Ascending aorta (tissue), 2 donors: ENCODE measurements at regions of chr4 and their contacts with region 1.

Region 1: GRCh38 chr4:1899149-1900086 is 28.2 kb downstream of the NSD2 start:
- DNase-seq: peak; percentile 13 to 84
- H3K4me3 ChIP-seq: no peak overlapping the region
- H3K27ac ChIP-seq: no peak overlapping the region
- H3K4me1 ChIP-seq: no peaks in the 10 kb centered on the region
- H3K27me3 ChIP-seq: no peaks in the 10 kb centered on the region
- CTCF ChIP-seq: peak; percentile 72 to 87 (median 80)

Region 2: DNA sequence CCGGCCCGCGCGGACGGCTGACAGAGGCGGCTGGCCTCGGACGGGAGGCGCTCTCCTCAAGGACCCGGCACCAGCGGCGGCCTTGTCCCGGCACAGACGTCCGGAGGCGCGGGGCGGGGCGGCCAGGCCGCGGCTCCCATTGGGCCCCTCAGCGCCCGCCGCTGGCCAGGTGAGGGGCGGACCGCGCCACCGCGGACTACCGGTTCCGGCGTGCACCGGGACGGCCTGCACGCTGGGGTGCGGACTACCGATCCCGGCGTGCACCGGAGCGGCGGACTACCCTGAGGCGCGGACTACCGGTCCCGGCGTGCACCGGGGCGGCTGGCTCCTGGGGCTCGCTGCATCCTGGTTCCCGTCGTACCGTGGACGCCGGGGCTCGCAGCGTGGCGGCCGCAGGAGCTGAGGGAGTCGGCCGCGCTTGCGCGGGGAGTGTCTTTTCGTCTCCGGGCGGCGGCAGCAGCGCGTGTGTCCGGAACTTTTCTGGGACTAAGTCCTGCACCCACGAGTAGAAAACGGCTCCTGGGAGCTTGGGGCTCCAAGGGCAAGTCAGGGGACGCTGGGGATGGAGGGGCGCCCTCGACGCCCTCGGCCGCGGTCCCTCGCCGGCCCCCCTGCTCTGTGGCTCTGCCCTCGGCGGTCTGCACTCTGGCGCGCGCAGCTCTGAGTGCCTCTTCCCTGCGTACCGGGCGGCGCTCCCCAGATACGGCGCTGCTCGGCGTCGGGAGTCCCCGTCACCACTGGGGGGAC is 43.2 kb before region 1 on chr4 and contains the start of gene LETM1:
- intact Hi-C with region 1: loop called (anchors 1 kb)
- DNase-seq: peak; percentile 86 to 97
- H3K4me3 ChIP-seq: peak within 1 kb of the TSS; percentile 85 to 86
- H3K27ac ChIP-seq: peak within 1 kb of the TSS; percentile 78 to 82
- H3K4me1 ChIP-seq: peaks cover 0 to 10% of the 10 kb centered on the region in 2 donors
- H3K27me3 ChIP-seq: no peaks in the 10 kb centered on the region
- CTCF ChIP-seq: peak in 1 of 3 experiments; percentile 28
- total RNA-seq, gene LETM1: 37.7 TPM